ENCODE measurements at regions of chr10 and their contacts with region 1.

Region 1: GRCh38 chr10:86936661-86937501 is 20.5 kb downstream of the MMRN2 start:
- DNase-seq: no peak
- ATAC-seq: no peak
- H3K4me3 ChIP-seq: no peak overlapping the region
- H3K27ac ChIP-seq: no peak overlapping the region
- H3K4me1 ChIP-seq: peaks cover 0 to 5% of the 10 kb centered on the region in 2 donors
- H3K27me3 ChIP-seq: no peaks in the 10 kb centered on the region
- CTCF ChIP-seq: no peak
- POLR2A ChIP-seq: no peak

Region 2: DNA sequence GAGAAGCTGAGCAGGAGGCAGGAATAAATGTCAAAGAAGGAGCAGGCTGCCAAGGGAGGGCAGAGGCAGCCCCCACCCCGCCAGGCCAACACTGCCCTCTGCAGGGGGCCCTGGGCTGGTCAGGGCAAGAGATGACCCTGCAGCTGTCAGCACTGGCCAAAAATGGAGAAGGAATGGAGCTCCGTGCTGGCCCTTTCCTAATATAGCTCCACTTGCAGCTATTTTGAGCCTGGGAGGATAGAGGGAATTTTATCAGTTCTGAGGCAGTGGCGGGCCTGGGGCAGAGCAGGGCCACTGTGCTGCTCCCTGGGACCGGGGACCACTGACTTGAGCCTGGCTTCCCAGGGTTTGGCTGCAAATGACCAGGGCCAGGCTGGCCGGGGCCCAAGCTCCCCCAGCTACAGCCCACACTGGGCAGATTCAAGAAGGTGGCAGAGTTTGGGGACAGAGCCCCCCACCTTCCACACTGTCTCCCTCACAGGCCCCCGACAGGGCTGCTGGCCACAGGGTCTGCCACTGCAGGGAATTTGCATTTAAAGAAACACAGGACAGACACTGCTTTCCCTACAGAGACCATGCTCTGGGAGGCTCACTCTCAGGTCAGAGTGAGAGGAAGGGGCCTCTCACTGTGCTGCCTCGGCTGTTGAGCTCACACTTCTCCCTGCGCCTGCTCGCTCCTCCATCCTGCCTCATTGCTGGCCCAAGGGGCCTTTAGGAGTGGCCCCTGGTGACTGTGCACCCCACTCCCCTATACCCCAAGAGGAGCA is 252.4 kb before region 1 on chr10:
- in situ Hi-C with region 1: no loop called
- intact Hi-C with region 1: no loop called
- DNase-seq: peak; percentile 47 to 91
- ATAC-seq: peak; percentile 71
- H3K4me3 ChIP-seq: no peak overlapping the region
- H3K27ac ChIP-seq: peak overlapping the region; percentile 98 to 100 (median 99)
- H3K4me1 ChIP-seq: peaks cover 83 to 91% of the 10 kb centered on the region in 2 donors
- H3K27me3 ChIP-seq: no peaks in the 10 kb centered on the region
- CTCF ChIP-seq: peak; percentile 76 to 92 (median 86)
- POLR2A ChIP-seq: no peak

Region 3: DNA sequence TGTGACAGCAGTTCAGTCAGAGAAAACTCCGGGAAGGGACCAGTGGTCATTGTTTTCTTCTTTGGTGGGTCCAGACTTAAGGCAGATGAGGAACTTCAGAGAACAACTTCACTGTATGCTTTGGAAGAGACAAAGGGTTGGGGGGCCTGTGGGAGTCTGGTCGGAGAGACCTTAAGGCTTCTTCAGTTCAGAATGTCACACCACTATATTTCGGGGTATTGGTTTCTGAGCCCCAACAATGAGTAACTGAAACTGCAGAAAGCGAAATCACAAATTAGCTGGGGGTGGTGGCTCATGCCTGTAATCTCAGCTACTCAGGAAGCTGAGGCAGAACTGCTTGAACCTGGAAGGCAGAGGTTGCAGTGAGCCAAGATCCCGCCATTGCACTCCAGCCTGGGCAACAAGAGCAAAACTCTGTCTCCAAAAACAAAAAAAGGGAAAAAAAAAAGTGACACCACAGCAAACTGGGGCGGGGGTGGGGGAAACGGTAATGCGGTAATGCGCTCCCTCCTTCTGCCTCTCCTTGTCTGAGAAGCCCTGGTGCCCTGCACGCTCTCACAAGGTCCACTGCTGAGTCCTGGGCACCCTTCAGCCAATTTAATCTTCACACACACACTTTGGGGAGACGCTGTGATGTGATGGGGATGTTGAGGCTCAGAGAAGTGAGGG is 29.2 kb after region 1 on chr10:
- in situ Hi-C with region 1: no loop called
- intact Hi-C with region 1: loop called (anchors 1 kb)
- DNase-seq: no peak
- ATAC-seq: no peak
- H3K4me3 ChIP-seq: no peak overlapping the region
- H3K27ac ChIP-seq: peak overlapping the region in 3 of 4 donors; percentile 49 to 98 (median 90)
- H3K4me1 ChIP-seq: peaks cover 29 to 37% of the 10 kb centered on the region in 2 donors
- H3K27me3 ChIP-seq: no peaks in the 10 kb centered on the region
- CTCF ChIP-seq: no peak
- POLR2A ChIP-seq: no peak

Measured in gastrocnemius medialis (tissue), 4 donors.